PC-9 (cell line): ENCODE measurements at regions of chr1 and their contacts with region 1.

Region 1: DNA sequence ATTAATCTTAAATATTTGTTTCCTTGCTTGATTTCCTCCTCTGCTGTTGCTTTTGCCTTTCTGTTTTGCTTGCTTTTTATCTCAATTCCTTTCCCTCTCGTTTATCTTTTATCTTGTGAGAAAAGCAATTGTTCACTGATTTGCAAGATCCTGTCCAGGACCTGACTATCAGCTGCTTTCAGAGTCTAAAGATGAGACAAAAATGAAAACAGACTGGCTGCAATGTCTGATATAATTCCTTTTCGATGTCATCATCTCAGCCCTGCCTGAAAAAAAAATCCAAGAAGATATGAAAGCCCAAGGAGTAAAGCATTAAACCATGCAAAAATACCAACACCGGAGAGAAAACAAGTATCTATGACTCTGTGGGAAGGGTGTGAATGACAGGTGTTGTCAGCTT is 225.5 kb downstream of the PATJ start:
- DNase-seq: no peak
- H3K4me3 ChIP-seq: no peak overlapping the region
- H3K27ac ChIP-seq: 0 out of 2 replicates have a peak overlapping the region, but pooled peaks have one; percentile 13
- H3K4me1 ChIP-seq: no peaks in the 10 kb centered on the region
- H3K27me3 ChIP-seq: no peaks in the 10 kb centered on the region
- CTCF ChIP-seq: no peak

Region 2: GRCh38 chr1:61873581-61873980 is 94.2 kb before region 1 on chr1:
- CTCF ChIA-PET with region 1: no interaction called
- POLR2A ChIA-PET with region 1: interaction called, 20 read pairs
- intact Hi-C with region 1: no loop called
- DNase-seq: no peak
- H3K4me3 ChIP-seq: no peak overlapping the region
- H3K27ac ChIP-seq: no peak overlapping the region
- H3K4me1 ChIP-seq: no peaks in the 10 kb centered on the region
- H3K27me3 ChIP-seq: no peaks in the 10 kb centered on the region
- CTCF ChIP-seq: no peak

Region 3: GRCh38 chr1:63214553-63214952 is 1246.8 kb after region 1 on chr1:
- CTCF ChIA-PET with region 1: no interaction called
- POLR2A ChIA-PET with region 1: no interaction called
- intact Hi-C with region 1: no loop called
- DNase-seq: no peak
- H3K4me3 ChIP-seq: no peak overlapping the region
- H3K27ac ChIP-seq: no peak overlapping the region
- H3K4me1 ChIP-seq: no peaks in the 10 kb centered on the region
- H3K27me3 ChIP-seq: peaks cover 11% of the 10 kb centered on the region; the same call in 1 of the 2 replicates
- CTCF ChIP-seq: no peak